Transverse colon (tissue), 4 donors: ENCODE measurements at regions of chr6 and their contacts with region 1.

Region 1: GRCh38 chr6:89599727-89600126 is 38.8 kb downstream of the LYRM2 start:
- DNase-seq: no peak
- H3K4me3 ChIP-seq: no peak overlapping the region
- H3K27ac ChIP-seq: no peak overlapping the region
- H3K4me1 ChIP-seq: no peaks in the 10 kb centered on the region
- H3K27me3 ChIP-seq: no peaks in the 10 kb centered on the region
- CTCF ChIP-seq: no peak
- EP300 ChIP-seq: no peak
- POLR2A ChIP-seq: no peak

Region 2: DNA sequence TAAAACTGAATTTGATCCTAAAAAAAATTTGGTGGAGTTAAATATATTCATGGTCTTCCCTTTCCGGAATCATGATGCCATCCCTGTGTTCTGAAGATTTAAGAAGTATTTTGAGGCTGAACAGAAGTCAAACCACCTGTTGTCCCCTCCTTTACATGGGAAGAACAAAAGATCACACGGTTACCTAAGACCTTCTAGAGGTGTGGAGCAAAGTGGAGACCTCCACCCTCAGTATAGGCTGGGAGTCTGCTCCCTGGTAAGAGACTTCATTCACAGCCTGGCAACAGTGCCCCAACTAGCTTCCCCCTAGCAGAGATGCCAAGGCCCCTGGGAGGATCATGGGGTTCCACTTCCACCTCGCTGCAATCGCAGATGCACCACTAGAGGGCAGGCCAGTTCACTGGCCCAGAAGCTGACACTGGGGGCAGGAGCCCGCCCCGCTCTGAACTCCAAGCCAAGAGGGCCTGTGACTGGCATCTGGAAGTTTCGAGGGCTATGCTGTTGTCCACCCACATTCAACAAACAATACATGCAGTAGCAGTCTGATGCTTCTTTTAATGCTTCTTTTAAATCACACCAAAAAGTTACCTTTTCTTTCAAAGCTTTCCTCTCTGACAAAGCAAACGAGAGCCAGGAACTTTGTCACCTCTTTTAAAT is 227.8 kb before region 1 on chr6:
- in situ Hi-C with region 1: no loop called
- intact Hi-C with region 1: loop called (anchors 5 kb)
- DNase-seq: peak; percentile 85
- H3K4me3 ChIP-seq: no peak overlapping the region
- H3K27ac ChIP-seq: peak overlapping the region; percentile 14 to 53 (median 21)
- H3K4me1 ChIP-seq: peaks cover 0 to 26% (median 12%) of the 10 kb centered on the region in 4 donors
- H3K27me3 ChIP-seq: no peaks in the 10 kb centered on the region
- CTCF ChIP-seq: peak; percentile 78 to 94 (median 91)
- EP300 ChIP-seq: no peak
- POLR2A ChIP-seq: no peak

Region 3: GRCh38 chr6:89432875-89433251 is 166.9 kb before region 1 on chr6 and contains the start of gene ANKRD6:
- in situ Hi-C with region 1: loop called in 1 of 4 experiments (anchors 10 kb)
- intact Hi-C with region 1: no loop called
- DNase-seq: peak; percentile 84
- H3K4me3 ChIP-seq: peak within 1 kb of the TSS; percentile 74 to 86 (median 81)
- H3K27ac ChIP-seq: peak within 1 kb of the TSS; percentile 10 to 40 (median 18)
- H3K4me1 ChIP-seq: peaks cover 4 to 14% (median 6%) of the 10 kb centered on the region in 4 donors
- H3K27me3 ChIP-seq: peaks cover 6% of the 10 kb centered on the region
- CTCF ChIP-seq: peak; percentile 57 to 92 (median 86)
- EP300 ChIP-seq: no peak
- POLR2A ChIP-seq: no peak
- total RNA-seq, gene ANKRD6: 2.7 to 9.4 (median 6.6) TPM

Region 4: DNA sequence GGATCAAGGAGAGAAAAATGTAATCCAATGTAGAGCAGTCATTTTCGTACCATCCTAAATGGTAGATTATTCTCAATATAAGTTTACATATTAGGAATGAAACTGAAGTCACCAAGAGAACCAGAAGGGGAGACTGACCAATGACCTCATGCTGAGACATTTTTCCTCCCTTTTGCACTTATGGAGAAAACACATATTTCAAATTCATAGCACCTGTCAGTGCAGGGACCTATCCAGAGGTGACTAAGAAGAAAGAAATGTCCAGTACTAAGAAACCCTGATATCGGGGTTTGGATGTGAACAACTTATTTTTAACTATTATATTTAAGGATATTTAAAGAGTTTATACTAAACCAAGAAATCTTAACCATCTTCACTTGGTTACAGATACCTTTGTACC is 55.4 kb after region 1 on chr6:
- in situ Hi-C with region 1: no loop called
- intact Hi-C with region 1: no loop called
- DNase-seq: no peak
- H3K4me3 ChIP-seq: no peak overlapping the region
- H3K27ac ChIP-seq: no peak overlapping the region
- H3K4me1 ChIP-seq: no peaks in the 10 kb centered on the region
- H3K27me3 ChIP-seq: no peaks in the 10 kb centered on the region
- CTCF ChIP-seq: no peak
- EP300 ChIP-seq: no peak
- POLR2A ChIP-seq: no peak

Region 5: DNA sequence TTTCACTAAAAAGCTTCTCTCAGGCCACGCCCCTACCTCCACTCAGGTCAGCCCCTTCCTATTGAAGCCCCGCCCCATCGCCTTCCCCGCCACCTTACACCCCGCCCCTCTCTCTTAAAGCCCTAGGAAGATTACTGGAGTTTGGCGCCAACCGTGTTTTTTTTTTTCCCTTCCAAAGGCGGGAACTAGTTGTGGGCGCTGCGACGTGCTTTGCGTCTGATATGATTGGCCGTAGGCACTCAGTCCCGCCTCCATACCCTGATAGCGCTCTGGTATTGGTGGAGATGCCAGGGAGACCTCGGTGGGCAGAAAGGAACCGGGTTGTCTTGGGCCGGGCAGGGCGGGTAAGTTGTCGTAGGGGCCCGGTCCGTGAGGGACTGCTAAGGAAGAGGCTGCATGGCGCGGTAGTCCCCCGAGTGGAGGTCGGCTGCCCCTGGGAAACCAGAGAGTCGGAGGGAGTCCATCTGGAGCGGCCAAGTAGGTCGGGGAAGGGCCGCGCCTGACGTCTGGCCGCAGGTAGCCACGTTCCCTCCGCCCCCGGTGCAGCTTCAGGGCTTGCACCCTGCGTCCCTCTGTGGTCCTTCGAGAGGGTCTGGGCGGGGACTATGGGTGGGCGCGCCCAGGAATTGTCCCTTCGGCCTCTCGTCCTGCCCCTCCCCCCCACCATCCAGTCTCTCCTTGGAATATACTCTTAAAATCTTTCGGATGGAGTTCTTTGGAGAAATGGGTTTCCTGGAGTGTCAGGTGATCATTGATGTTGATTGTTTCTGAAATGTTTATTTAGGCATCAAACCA is 230.1 kb after region 1 on chr6 and contains the start of gene CASP8AP2:
- in situ Hi-C with region 1: no loop called
- intact Hi-C with region 1: no loop called
- DNase-seq: peak; percentile 97
- H3K4me3 ChIP-seq: peak within 1 kb of the TSS; percentile 79 to 89 (median 84)
- H3K27ac ChIP-seq: peak within 1 kb of the TSS; percentile 88 to 97 (median 92)
- H3K4me1 ChIP-seq: peaks cover 4 to 14% (median 10%) of the 10 kb centered on the region in 4 donors
- H3K27me3 ChIP-seq: no peaks in the 10 kb centered on the region
- CTCF ChIP-seq: no peak
- EP300 ChIP-seq: no peak
- POLR2A ChIP-seq: no peak
- total RNA-seq, gene CASP8AP2: 8.0 to 19.8 (median 15.1) TPM